AG04450 (cell line): ENCODE measurements at regions of chr5 and their contacts with region 1.

Region 1: DNA sequence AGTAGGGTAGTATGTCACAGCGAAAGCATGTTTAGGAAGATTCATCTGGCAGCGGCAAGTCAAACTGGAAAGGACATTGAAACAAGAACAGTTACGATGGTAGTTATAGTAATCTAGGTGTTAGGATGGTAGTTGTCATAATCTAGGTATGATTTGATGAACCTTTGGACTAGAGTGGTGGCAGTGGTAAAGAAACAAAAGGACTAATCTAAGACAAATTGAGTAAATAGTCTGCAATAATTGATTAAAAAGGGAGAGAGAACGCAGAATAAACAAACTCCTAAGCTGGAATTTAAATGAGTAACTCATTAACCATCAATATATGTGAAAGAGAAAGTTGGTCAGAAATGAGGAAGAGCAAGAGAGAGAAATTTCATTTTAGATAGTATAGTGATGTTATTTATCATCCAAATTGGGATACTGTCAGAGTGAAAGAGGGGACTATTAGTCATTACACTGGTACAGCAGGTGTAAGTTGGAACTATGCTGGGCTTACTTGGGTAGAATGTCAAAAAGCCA is 56.8 kb downstream of the MTREX start:
- DNase-seq: no peak
- H3K4me3 ChIP-seq: no peak overlapping the region
- H3K27ac ChIP-seq: no peak overlapping the region
- H3K27me3 ChIP-seq: no peaks in the 10 kb centered on the region
- CTCF ChIP-seq: no peak

Region 2: DNA sequence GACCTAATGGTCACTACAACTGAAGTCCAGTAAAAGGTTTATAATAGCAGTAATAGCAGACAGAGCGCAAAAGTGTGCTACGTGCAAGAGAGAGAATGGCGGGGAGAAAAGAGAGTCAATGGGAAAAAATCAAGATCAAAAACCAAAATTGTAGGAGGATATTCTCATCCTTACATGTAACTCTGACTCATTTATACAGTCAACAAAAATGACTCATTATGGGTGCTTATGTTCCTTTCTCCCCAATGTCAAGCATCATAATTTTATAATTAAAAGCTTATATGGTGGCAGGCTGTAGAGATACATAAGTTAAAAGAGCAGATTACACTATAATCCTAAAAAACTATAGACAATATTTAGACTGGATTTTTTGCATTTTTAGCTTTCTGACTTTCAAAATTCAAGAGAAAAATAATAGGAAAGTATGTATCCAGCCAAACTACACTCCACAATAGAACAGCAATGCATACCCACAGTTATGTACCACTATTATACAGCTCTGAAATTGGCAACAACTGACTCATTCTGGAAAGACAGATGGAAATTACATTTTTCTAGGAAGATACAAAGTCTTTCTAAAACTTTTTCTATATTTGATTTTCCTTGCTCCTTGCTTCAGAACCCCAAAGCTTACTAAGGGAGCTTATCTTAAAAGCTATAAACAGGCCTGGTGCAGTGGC is 91.8 kb after region 1 on chr5:
- CTCF ChIA-PET with region 1: interaction called, 13 read pairs
- POLR2A ChIA-PET with region 1: no interaction called
- DNase-seq: no peak
- H3K4me3 ChIP-seq: no peak overlapping the region
- H3K27ac ChIP-seq: no peak overlapping the region
- H3K27me3 ChIP-seq: no peaks in the 10 kb centered on the region
- CTCF ChIP-seq: no peak